ENCODE measurements at regions of chr1 and their contacts with region 1.

Region 1: GRCh38 chr1:202009326-202010179 is 834 bp upstream of the ELF3 start:
- DNase-seq: no peak
- ATAC-seq: peak; percentile 65
- H3K4me3 ChIP-seq: peak overlapping the region; percentile 8
- H3K27ac ChIP-seq: peak overlapping the region; percentile 80
- H3K4me1 ChIP-seq: no peaks in the 10 kb centered on the region
- H3K27me3 ChIP-seq: no peaks in the 10 kb centered on the region
- CTCF ChIP-seq: peak; percentile 86

Region 2: DNA sequence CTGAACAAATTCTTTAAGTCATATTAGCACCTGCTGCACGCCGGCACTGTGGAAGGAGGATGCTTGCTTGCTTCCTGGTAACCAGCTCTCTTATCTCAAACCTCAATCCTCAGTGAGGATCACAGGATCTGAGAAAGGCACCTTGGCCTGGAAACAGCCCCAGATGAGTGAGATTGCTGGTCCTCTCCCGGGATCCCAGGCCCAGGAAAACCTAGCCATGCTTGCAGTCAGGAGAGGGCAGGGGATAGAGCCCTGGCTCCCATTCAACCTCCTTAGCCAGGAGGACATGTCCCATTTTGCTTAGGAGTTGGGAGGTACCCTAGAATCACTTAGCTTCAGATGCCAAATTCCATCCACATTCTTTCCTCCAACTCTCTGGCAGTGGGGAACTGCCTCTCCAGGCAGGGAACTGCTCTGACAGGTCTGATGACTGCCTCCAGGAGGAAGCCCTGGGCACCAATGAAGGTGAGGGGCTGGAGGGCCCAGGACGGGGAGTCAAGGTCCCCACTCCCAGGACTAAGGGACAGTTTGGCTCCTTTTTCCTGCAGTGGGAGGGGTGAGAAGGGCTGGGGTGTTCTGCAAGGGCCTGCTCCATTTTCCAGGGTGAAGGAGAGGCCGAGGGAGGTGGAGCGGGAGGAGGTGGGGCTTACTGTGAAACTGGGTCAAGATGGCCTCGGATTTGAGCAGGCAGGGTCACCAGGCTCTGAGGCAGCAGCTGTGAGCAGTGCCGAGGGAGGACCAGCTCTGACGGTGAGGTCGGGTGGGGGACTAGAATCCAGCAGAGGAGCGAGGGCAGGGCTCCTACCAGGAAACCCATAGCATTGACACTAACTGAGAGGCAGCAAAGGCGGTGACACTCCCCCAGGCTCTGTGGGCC is 122.7 kb after region 1 on chr1:
- intact Hi-C with region 1: loop called (anchors 5 kb)
- DNase-seq: peak; percentile 83
- ATAC-seq: peak; percentile 79
- H3K4me3 ChIP-seq: peak overlapping the region; percentile 21
- H3K27ac ChIP-seq: peak overlapping the region; percentile 86
- H3K4me1 ChIP-seq: peaks cover 28% of the 10 kb centered on the region
- H3K27me3 ChIP-seq: no peaks in the 10 kb centered on the region
- CTCF ChIP-seq: no peak

Region 3: GRCh38 chr1:202283379-202283844 is 273.9 kb after region 1 on chr1:
- intact Hi-C with region 1: loop called (anchors 10 kb)
- DNase-seq: no peak
- ATAC-seq: peak; percentile 33
- H3K4me3 ChIP-seq: no peak overlapping the region
- H3K27ac ChIP-seq: no peak overlapping the region
- H3K4me1 ChIP-seq: peaks cover 26% of the 10 kb centered on the region
- H3K27me3 ChIP-seq: no peaks in the 10 kb centered on the region
- CTCF ChIP-seq: no peak

Measured in upper lobe of right lung (tissue), 1 donor.